Heart right ventricle (tissue), 16 donors: ENCODE measurements at regions of chr19 and their contacts with region 1.

Region 1: GRCh38 chr19:48993175-48994034 is at the starts of genes GYS1 and RUVBL2:
- DNase-seq: peak; percentile 99 to 100
- ATAC-seq: peak; percentile 90 to 96 (median 94)
- H3K4me3 ChIP-seq: peak within 1 kb of the TSS; percentile 54 to 99 (median 88)
- H3K27ac ChIP-seq: peak within 1 kb of the TSS; percentile 74 to 98 (median 95)
- H3K4me1 ChIP-seq: peaks cover 9 to 52% (median 42%) of the 10 kb centered on the region in 9 donors
- H3K27me3 ChIP-seq: no peaks in the 10 kb centered on the region
- CTCF ChIP-seq: peak in 8 of 9 donors; percentile 96 to 99 (median 98)
- total RNA-seq, gene GYS1: 139 to 245 (median 201) TPM
- total RNA-seq, gene RUVBL2: 40.1 to 60.4 (median 49.3) TPM

Region 2: GRCh38 chr19:48872182-48872883 is 121.1 kb before region 1 on chr19 and contains the start of gene PPP1R15A:
- intact Hi-C with region 1: loop called in 1 of 10 experiments (anchors 1 kb)
- DNase-seq: peak; percentile 98
- ATAC-seq: peak; percentile 59 to 88 (median 78)
- H3K4me3 ChIP-seq: peak within 1 kb of the TSS; percentile 69 to 100 (median 92)
- H3K27ac ChIP-seq: peak within 1 kb of the TSS; percentile 96 to 100 (median 100)
- H3K4me1 ChIP-seq: peaks cover 7 to 62% (median 53%) of the 10 kb centered on the region in 9 donors
- H3K27me3 ChIP-seq: no peaks in the 10 kb centered on the region
- CTCF ChIP-seq: peak in 2 of 9 donors; percentile 10 to 19
- total RNA-seq, gene PPP1R15A: 55.4 to 123 (median 73.7) TPM

Region 3: GRCh38 chr19:49073514-49074378 is 80.3 kb after region 1 on chr19:
- intact Hi-C with region 1: loop called in 2 of 10 experiments (anchors 10 kb)
- DNase-seq: no peak
- ATAC-seq: peak in 7 of 8 donors; percentile 35 to 84 (median 52)
- H3K4me3 ChIP-seq: no peak overlapping the region
- H3K27ac ChIP-seq: peak overlapping the region in 2 of 10 donors; percentile 21 to 43
- H3K4me1 ChIP-seq: peaks cover 0 to 8% (median 0%) of the 10 kb centered on the region in 9 donors
- H3K27me3 ChIP-seq: peaks cover 0 to 60% (median 52%) of the 10 kb centered on the region in 7 donors
- CTCF ChIP-seq: peak in 5 of 9 donors; percentile 10 to 29 (median 13)

Region 4: DNA sequence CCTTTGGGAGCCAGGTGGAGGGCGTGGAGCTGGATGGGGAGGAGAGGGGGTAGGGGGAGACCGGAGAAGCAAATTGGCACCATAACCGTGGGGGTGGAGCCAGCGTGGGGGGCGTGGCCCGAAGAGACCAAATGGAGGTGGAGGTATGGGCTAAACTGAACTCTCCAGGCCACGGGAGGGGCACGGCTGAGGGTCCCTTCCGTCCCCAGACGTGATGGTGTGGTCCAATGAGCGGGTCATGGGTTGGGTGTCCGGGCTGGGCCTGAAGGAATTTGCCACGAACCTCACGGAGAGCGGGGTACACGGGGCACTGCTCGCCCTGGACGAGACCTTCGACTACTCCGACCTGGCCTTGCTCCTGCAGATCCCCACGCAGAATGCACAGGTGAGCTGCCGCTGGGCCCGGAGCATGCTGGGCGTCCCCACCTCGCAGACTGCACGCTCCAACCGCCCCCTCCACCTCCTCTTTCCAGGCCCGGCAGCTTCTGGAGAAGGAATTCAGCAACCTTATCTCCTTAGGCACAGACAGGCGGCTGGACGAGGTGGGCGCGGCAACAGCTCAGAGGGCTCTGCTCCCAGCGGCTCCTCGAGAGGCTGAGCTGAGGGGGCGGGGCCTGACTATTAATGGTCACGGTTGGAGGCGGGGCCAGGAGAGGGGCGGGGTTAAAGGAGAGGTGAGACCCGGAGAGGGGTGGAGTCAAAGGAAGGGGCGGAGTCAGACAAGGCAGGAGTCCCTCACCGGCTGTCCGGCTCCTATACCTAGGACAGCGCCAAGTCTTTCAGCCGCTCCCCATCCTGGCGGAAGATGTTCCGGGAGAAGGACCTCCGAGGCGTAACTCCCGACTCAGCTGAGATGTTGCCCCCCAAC is 155.6 kb after region 1 on chr19:
- intact Hi-C with region 1: loop called in 1 of 10 experiments (anchors 10 kb)
- DNase-seq: peak; percentile 98 to 99
- ATAC-seq: peak; percentile 79 to 89 (median 82)
- H3K4me3 ChIP-seq: peak overlapping the region; percentile 59 to 91 (median 69)
- H3K27ac ChIP-seq: peak overlapping the region; percentile 75 to 97 (median 84)
- H3K4me1 ChIP-seq: peaks cover 12 to 62% (median 48%) of the 10 kb centered on the region in 9 donors
- H3K27me3 ChIP-seq: peaks cover 0 to 40% (median 0%) of the 10 kb centered on the region in 7 donors
- CTCF ChIP-seq: no peak

Region 5: GRCh38 chr19:49200238-49200862 is 206.9 kb after region 1 on chr19:
- intact Hi-C with region 1: loop called in 2 of 10 experiments (anchors 10 kb)
- DNase-seq: no peak
- ATAC-seq: peak in 1 of 8 donors; percentile 23
- H3K4me3 ChIP-seq: no peak overlapping the region
- H3K27ac ChIP-seq: no peak overlapping the region
- H3K4me1 ChIP-seq: peaks cover 0 to 36% (median 5%) of the 10 kb centered on the region in 9 donors
- H3K27me3 ChIP-seq: no peaks in the 10 kb centered on the region
- CTCF ChIP-seq: no peak

Region 6: DNA sequence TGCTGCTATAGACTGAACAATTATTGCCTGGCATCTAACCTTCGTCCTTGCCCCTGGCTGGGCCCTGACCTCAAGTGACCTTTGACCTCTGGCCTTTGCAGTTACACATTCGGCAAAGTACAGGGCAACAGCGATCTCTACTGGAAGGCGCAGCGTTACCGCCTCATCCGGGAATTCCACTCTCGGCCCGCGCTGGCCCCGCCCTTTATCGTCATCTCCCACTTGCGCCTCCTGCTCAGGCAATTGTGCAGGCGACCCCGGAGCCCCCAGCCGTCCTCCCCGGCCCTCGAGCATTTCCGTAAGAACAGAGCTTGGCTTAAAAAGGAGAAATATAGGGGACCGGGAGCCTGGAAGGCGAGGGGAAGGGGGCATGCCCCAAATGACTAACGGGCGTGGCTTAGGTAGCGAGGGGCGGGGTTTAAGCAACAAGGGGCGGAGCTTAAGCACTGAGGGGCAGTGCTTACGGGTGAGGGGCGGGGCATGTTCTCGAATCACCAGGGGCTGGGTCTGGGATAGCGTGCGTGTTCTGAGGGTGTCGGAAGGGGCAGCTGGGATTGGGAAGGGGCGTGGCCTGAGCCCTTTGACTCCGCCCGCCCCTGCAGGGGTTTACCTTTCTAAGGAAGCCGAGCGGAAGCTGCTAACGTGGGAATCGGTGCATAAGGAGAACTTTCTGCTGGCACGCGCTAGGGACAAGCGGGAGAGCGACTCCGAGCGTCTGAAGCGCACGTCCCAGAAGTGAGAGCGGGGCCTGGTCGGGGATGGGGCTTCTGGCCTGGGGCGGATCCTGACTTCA is 216.9 kb after region 1 on chr19:
- intact Hi-C with region 1: loop called in 3 of 10 experiments (anchors 10 kb)
- DNase-seq: no peak
- ATAC-seq: peak in 4 of 8 donors; percentile 16 to 46 (median 40)
- H3K4me3 ChIP-seq: no peak overlapping the region
- H3K27ac ChIP-seq: peak overlapping the region in 1 of 10 donors; percentile 7
- H3K4me1 ChIP-seq: peaks cover 0 to 21% (median 11%) of the 10 kb centered on the region in 9 donors
- H3K27me3 ChIP-seq: no peaks in the 10 kb centered on the region
- CTCF ChIP-seq: no peak